ENCODE measurements at regions of chr17 and their contacts with region 1.

Region 1: GRCh38 chr17:76014184-76014924 is 12.8 kb downstream of the EVPL start:
- DNase-seq: peak; percentile 84
- H3K4me3 Mint-ChIP-seq: no peak overlapping the region
- H3K27ac Mint-ChIP-seq: no peak overlapping the region
- H3K4me1 Mint-ChIP-seq: peaks cover 5% of the 10 kb centered on the region
- H3K27me3 Mint-ChIP-seq: no peaks in the 10 kb centered on the region

Region 2: DNA sequence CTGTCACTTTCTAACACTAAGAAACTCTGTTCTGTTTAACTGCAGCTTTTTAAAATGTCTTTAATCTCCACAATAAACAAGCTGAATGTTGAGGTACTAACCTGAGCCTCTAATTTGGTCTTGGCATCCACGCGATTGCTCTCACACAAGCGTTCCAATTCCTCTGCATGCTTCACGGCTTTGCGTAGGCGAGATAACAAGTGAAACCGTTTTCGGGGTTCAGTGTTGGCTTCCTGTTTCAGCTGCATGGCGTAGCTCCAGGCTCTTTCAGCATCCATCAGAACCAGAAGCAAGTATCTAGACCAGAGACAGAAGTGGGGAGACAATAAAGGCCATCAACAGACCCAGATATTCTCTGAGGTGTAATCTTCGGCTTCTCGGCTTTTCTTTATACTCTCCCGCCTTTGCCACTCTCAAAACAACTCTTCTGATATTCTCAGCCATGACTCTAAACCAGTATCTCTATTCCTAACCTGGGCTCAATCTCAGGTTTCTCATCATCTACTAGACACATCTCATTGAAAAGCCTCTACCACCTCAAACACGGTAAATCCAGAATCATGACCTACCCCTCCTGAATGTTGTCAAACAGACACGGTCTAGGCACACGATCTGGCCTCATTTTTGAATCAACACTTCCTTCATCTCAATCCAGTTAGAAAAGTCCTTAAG is 49.7 kb after region 1 on chr17:
- CTCF ChIA-PET with region 1: interaction called, 15 read pairs
- intact Hi-C with region 1: no loop called
- DNase-seq: peak; percentile 73
- H3K4me3 Mint-ChIP-seq: peak overlapping the region; percentile 52
- H3K27ac Mint-ChIP-seq: peak overlapping the region; percentile 79
- H3K4me1 Mint-ChIP-seq: peaks cover 23% of the 10 kb centered on the region
- H3K27me3 Mint-ChIP-seq: no peaks in the 10 kb centered on the region

Region 3: DNA sequence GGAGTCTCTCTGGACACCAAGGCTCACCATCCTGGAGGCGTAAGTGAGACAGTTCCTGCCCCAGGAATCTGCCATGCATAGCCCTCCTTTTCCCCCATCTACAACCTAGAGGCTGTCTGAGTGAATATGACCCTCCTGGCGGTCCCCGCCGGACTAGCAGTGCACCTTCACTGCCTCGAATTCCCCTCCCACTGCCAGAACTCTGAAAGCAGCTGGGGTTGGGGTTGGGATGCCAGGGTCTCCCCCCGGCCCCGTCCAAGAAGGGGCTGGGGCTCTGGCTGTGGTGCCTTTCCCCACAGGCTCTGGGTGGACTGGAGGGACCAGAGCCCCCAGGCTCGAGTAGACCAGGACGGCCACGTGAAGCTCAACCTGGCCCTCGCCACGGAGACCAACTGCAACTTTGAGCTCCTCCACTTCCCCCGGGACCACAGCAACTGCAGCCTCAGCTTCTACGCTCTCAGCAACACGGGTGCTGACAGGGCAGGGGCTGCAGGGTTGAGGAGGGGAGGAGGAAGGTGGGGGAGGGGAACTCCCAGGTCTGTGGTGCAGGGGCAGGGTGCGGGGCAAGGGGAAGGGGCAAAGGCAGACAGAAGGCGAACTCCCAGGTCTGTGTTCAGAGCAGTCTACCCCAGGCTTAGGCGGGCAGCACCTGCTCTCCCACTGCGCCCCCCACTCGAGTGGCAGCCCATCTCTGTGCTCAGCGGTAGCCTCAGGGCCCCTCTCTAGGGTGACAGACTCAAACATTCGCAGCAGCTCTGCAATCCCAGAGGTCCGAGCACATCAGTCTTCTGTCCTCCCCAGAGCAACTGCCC is 65.8 kb after region 1 on chr17:
- CTCF ChIA-PET with region 1: interaction called, 11 read pairs
- intact Hi-C with region 1: loop called (anchors 1 kb)
- DNase-seq: no peak
- H3K4me3 Mint-ChIP-seq: no peak overlapping the region
- H3K27ac Mint-ChIP-seq: no peak overlapping the region
- H3K4me1 Mint-ChIP-seq: peaks cover 42% of the 10 kb centered on the region
- H3K27me3 Mint-ChIP-seq: peaks cover 40% of the 10 kb centered on the region

Region 4: DNA sequence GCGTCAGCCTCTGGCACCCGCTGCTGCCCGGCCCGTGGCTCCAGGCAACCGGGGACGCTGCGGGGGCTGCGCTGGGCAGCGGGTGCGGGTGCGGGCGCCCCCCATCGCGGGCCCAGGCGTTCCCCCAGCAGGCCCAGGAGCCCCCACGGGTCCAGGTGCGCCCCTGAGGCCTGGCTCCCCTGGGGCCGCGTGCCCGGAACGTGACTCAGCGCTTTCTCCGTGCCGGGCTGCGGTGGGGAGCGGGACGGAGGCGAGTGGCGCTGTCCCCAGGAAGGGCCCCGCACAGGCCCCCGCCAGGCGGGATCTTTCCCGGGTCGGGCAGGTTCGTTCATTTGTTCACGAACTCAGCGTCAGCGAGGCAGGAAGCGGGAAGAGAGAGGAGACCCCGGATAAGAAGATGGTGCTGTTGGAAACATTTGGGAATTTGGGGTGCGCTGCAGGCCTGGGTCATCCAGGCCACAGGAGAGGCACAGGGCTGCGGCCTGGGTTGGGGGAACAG is 107.6 kb after region 1 on chr17:
- CTCF ChIA-PET with region 1: interaction called, 11 read pairs
- intact Hi-C with region 1: no loop called
- DNase-seq: peak; percentile 39
- H3K4me3 Mint-ChIP-seq: peak overlapping the region; percentile 21
- H3K27ac Mint-ChIP-seq: peak overlapping the region; percentile 80
- H3K4me1 Mint-ChIP-seq: peaks cover 19% of the 10 kb centered on the region
- H3K27me3 Mint-ChIP-seq: no peaks in the 10 kb centered on the region

Region 5: DNA sequence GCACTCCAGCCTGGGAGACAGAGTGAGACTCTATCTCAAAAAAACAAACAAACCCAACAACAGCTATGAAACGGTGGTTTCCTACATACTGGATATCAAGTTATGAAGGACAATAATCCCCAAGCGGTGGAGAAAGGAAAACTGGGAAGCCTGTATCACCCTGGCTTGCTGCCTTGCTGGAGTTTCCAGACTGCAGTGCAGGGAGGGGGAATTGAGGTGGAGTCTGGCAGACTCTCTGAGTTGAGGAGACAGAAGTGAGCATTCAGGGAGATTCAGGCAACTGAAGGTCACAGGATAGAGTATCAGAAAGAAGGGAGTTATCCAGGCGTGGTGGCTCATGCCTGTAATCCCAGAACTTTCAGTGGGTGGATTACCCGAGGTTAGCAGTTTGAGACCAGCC is 281.8 kb after region 1 on chr17:
- CTCF ChIA-PET with region 1: interaction called, 31 read pairs
- intact Hi-C with region 1: loop called (anchors 1 kb)
- DNase-seq: no peak
- H3K4me3 Mint-ChIP-seq: no peak overlapping the region
- H3K27ac Mint-ChIP-seq: no peak overlapping the region
- H3K4me1 Mint-ChIP-seq: peaks cover 2% of the 10 kb centered on the region
- H3K27me3 Mint-ChIP-seq: no peaks in the 10 kb centered on the region